ENCODE measurements at regions of chr10 and their contacts with region 1.

Region 1: GRCh38 chr10:96513698-96514561 is at the start of gene TLL2:
- DNase-seq: peak; percentile 94
- H3K4me3 ChIP-seq: peak within 1 kb of the TSS; percentile 29 to 60 (median 54)
- H3K27ac ChIP-seq: peak within 1 kb of the TSS in 3 of 4 donors; percentile 52 to 64 (median 58)
- H3K4me1 ChIP-seq: peaks cover 0 to 26% (median 22%) of the 10 kb centered on the region in 4 donors
- H3K27me3 ChIP-seq: peaks cover 0 to 20% (median 0%) of the 10 kb centered on the region in 3 donors
- CTCF ChIP-seq: peak; percentile 60 to 80 (median 73)
- EP300 ChIP-seq: no peak
- POLR2A ChIP-seq: no peak
- total RNA-seq, gene TLL2: 0.14 to 2.2 (median 0.26) TPM

Region 2: DNA sequence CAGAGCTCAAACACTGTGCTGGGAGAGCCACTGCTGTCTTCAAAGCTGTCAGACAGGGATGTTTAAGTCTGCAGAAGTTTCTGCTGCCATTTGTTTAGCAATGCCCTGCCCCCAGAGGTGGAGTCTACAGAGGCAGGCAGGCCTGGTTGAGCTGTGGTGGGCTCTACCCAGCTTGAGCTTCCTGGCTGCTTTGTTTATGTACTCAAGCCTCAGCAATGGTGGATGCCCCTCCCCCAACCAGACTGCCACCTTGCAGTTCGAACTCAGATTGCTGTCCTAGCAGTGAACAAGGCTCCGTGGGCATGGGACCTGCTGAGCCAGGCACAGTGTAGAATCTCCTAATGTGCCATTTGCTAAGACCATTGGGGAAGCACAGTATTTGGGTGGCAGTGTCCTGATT is 1756.0 kb before region 1 on chr10:
- intact Hi-C with region 1: no loop called
- DNase-seq: no peak
- H3K4me3 ChIP-seq: no peak overlapping the region
- H3K27ac ChIP-seq: no peak overlapping the region
- H3K4me1 ChIP-seq: no peaks in the 10 kb centered on the region
- H3K27me3 ChIP-seq: no peaks in the 10 kb centered on the region
- CTCF ChIP-seq: no peak
- EP300 ChIP-seq: no peak
- POLR2A ChIP-seq: no peak

Region 3: GRCh38 chr10:94936721-94937120 is 1577.2 kb before region 1 on chr10:
- intact Hi-C with region 1: no loop called
- DNase-seq: no peak
- H3K4me3 ChIP-seq: no peak overlapping the region
- H3K27ac ChIP-seq: no peak overlapping the region
- H3K4me1 ChIP-seq: no peaks in the 10 kb centered on the region
- H3K27me3 ChIP-seq: no peaks in the 10 kb centered on the region
- CTCF ChIP-seq: no peak
- EP300 ChIP-seq: no peak
- POLR2A ChIP-seq: no peak

Region 4: DNA sequence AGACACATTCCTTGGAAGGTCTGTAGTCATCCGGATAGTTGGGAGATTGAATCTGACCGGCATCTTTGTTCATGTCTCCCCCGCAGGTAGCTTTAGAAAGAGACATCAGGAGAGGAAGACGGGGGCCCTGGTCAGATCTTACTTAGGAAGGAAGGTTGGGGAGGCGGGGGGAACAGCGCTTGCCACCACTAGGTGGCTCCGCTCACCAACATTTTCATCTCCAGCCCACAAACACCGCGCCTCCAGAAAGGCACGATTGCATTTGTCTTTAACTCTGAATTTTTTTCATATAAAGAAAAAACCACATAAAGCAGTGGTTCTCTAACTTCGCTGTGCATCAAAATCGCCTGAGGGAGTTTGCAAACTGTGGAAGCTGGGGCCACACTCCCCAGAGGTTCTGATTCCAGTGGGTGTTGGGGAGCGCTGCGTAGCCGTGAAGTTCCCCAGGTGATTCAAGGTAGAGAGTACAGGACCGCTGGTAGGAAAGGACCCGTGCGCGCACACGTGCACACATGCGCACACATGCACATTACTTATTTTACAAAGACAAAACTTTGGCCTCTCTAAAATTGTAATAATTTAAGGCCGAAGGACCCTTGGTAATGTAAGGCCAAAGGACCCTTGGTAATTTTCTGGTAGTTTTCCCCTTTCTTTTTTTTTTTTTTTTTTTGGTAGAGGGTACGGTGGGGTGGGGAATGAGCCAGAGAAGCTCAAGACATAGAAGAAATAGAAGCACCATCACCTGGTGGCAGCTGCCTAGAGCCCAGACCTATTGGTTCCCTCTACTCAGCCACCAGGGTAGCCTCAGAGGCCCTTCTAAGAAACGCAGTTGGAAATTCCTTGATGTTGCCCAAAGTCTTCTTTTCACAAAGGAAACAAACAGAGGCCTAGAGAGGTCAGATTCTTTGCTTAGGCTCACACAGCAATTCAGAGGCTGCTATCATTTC is 117.7 kb before region 1 on chr10:
- intact Hi-C with region 1: loop called (anchors 1 kb)
- DNase-seq: peak; percentile 87
- H3K4me3 ChIP-seq: no peak overlapping the region
- H3K27ac ChIP-seq: no peak overlapping the region
- H3K4me1 ChIP-seq: peaks cover 0 to 13% (median 7%) of the 10 kb centered on the region in 4 donors
- H3K27me3 ChIP-seq: peaks cover 0 to 9% (median 0%) of the 10 kb centered on the region in 3 donors
- CTCF ChIP-seq: peak; percentile 79 to 88 (median 82)
- EP300 ChIP-seq: no peak
- POLR2A ChIP-seq: no peak

Region 5: GRCh38 chr10:96618653-96619052 is 104.7 kb after region 1 on chr10:
- intact Hi-C with region 1: loop called (anchors 5 kb)
- DNase-seq: peak; percentile 75
- H3K4me3 ChIP-seq: no peak overlapping the region
- H3K27ac ChIP-seq: peak overlapping the region in 3 of 4 donors; percentile 66 to 73 (median 67)
- H3K4me1 ChIP-seq: peaks cover 0 to 28% (median 21%) of the 10 kb centered on the region in 4 donors
- H3K27me3 ChIP-seq: no peaks in the 10 kb centered on the region
- CTCF ChIP-seq: no peak
- EP300 ChIP-seq: no peak
- POLR2A ChIP-seq: no peak